Uterus (tissue), 4 donors: ENCODE measurements at regions of chr12 and their contacts with region 1.

Region 1: DNA sequence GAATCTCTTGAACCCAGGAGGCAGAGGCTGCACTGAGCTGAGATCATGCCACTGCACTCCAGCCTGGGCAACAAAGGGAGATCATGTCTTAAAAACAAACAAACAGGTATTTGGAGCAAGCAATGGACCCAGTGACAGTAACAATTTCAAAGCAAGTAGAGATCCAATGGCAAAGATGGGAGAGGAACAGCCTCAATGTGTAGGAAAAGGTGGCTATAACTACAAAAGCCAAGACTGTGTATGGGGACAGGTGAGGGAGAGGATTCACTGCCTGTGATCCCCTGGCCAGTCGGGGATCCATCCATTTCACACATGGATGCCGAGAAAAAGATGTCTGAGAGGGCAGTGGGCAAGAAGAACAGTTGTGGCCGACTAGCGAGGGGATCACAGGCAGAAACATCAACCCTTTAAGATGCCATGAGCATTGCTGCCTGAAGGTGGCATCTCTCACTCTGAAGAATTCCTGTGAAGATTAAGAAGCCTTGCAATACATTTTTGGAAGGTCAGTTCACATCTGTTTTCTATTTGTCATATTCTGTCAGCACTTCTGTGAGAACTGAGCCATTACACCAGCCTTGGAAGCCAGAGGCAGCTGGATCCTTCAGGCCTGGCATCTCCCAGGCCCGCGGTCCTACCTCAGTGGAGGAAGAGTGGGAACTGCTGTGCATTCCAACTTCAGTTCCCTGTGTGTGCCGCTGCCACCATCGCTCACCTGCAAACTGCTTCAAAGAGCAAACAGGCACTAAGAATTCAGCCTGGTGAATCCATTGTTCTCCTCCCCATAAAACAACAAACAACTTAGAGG is 54.5 kb upstream of the FRS2 start:
- DNase-seq: peak; percentile 56 to 65
- H3K4me3 ChIP-seq: peak overlapping the region in 1 of 2 donors; percentile 4
- H3K27ac ChIP-seq: peak overlapping the region; percentile 38 to 47
- H3K4me1 ChIP-seq: no peaks in the 10 kb centered on the region
- H3K27me3 ChIP-seq: no peaks in the 10 kb centered on the region
- CTCF ChIP-seq: peak; percentile 80 to 85 (median 82)
- POLR2A ChIP-seq: no peak

Region 2: DNA sequence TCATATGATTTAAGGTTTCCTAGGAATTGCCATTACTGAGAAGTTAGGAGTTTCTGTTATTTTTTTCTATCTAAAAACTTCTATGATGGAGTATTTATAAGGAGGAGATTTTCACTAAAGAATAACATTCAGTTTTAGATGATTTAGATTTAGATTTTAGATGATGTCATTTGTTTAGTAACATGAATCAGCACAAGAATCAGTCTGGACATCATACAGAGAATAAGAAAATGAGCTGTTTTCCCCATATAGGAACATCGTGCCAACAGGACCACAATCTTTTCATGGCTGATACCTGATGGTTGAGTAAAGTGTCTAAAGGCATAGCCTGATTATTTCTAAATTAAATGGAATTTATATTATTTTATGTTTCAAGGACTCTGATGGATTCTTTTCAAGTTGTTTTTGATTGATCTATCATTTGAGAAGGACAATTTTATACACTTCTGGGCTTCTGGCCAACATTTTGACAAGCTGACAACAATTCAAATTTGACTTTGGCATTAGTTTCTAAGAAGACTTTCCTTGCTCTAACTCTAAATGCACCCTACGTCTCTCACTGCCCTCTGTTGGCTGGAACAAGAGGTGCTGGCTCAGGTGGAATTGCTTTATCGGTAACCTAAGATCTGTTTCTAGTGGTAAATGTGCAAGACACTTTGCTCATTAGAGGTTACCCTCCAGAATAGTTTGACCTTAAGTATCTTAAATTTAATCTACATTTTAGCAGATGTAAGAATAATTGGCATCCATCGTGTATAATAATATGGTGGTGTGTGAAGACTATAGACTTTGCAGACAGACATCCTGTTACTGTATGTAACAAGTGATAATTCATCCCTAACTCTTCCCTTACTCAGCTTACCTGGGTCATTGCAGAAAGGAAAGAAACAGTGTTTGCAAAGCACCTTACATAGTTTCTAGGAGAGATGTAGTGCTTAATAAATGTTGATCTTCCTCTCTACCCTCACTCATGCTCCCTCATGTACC is 219.1 kb before region 1 on chr12:
- intact Hi-C with region 1: no loop called
- DNase-seq: no peak
- H3K4me3 ChIP-seq: no peak overlapping the region
- H3K27ac ChIP-seq: no peak overlapping the region
- H3K4me1 ChIP-seq: no peaks in the 10 kb centered on the region
- H3K27me3 ChIP-seq: no peaks in the 10 kb centered on the region
- CTCF ChIP-seq: no peak
- POLR2A ChIP-seq: no peak

Region 3: DNA sequence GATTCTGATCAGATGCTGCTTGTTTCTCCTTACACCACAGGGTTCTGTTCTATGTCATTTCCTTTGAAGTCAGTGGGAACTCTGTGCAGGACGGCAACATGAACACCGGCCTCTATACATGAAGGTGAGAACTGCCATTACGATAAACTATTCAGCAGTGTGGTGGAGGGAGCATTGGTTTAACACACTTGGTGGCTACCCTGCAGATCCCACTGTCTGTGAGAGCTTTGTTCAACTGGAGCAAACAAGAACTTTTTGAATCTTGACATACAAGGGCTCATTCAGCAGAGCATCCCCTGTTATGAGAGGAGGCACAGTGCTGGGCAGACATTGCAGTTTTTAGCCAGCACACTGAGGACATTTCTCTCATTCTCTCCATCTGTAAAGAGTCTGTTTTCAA is 43.8 kb after region 1 on chr12:
- intact Hi-C with region 1: no loop called
- DNase-seq: no peak
- H3K4me3 ChIP-seq: no peak overlapping the region
- H3K27ac ChIP-seq: no peak overlapping the region
- H3K4me1 ChIP-seq: no peaks in the 10 kb centered on the region
- H3K27me3 ChIP-seq: no peaks in the 10 kb centered on the region
- CTCF ChIP-seq: no peak
- POLR2A ChIP-seq: no peak

Region 4: GRCh38 chr12:69470189-69471075 is 54.8 kb after region 1 on chr12 and contains the start of gene FRS2:
- intact Hi-C with region 1: no loop called
- DNase-seq: peak; percentile 89 to 92
- H3K4me3 ChIP-seq: peak within 1 kb of the TSS; percentile 75 to 83
- H3K27ac ChIP-seq: peak within 1 kb of the TSS; percentile 90 to 91
- H3K4me1 ChIP-seq: peaks cover 0 to 13% of the 10 kb centered on the region in 2 donors
- H3K27me3 ChIP-seq: no peaks in the 10 kb centered on the region
- CTCF ChIP-seq: peak in 2 of 4 experiments; percentile 14 to 19
- POLR2A ChIP-seq: peak; percentile 64 to 84
- total RNA-seq, gene FRS2: 27.4 to 159 (median 65.4) TPM

Region 5: DNA sequence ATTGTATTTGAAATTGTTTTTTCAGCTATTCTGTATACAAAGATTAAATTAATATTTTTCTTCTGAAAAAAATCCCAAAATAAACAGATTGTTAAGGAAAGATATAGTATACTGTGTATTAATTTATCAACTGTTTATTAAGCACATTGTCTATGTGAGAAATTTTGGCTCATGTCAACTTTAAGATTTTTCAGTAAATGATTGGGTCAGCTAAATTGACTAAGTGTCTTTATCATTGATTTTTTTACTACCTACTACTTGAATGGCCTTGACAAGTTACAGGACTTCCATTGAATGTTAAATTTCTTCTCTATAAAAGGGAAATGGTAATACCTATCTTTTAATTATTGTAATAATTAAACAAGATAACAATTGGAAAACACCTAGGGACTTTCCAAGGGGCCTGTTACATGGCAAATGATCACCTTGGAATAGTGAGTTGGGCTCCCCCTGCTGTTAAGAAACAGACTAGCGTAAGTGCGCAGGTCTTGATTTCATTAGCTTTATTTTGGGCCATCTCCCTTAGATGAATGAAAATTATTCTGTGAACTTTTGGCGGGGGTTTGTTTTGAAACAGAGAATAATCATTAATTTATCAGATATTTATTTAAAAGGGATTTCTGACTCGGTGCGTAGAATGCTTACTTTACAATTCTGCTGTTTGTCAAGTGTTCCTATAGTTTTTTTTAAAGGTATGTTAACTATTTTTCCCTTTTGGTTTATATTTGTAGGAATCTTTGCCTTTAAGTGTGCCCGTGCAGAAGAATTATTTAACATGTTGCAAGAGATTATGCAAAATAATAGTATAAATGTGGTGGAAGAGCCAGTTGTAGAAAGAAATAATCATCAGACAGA is 155.1 kb after region 1 on chr12:
- intact Hi-C with region 1: loop called (anchors 10 kb)
- DNase-seq: peak; percentile 43 to 63
- H3K4me3 ChIP-seq: no peak overlapping the region
- H3K27ac ChIP-seq: no peak overlapping the region
- H3K4me1 ChIP-seq: no peaks in the 10 kb centered on the region
- H3K27me3 ChIP-seq: no peaks in the 10 kb centered on the region
- CTCF ChIP-seq: peak; percentile 73 to 82 (median 77)
- POLR2A ChIP-seq: no peak